Dorsolateral prefrontal cortex (tissue), 120 donors: ENCODE measurements at regions of chr6 and their contacts with region 1.

Region 1: DNA sequence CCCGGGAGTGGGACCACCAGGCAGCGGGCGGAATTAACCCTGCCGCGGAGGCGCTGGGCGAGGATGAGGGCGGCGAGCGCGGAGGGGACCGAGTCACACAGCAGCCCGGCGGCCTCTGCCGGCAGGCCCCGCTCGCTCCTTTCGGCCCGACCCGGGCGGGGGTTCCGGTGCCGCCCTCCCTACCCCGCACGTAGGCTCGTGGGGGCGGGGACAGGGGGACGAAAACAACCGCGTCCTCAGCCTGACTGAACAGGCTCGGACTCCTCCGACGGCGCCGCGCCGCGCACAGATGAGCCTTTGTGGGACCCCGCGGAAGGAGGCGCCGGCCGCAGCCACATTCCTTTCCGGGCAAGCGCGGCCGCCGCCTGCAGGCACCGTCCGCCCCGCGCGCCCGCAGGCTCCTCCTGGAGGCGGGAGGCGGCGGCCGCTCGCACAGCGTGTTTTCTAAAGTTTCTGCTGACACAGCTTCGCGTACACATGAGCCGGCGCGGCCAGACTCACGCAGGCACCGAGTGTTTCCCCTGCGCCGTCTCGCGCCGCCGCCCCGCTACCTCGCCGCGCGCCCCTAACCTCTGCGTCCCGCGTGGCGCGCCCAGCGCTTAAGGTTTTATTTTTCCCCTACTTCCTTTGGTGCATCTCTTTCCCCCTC is 244.3 kb downstream of the ARID1B start:
- DNase-seq: peak; percentile 82 to 93 (median 89)
- H3K4me3 ChIP-seq: peak overlapping the region; percentile 48 to 98 (median 83)
- H3K27ac ChIP-seq: peak overlapping the region; percentile 89 to 100 (median 99)
- H3K27me3 ChIP-seq: no peaks in the 10 kb centered on the region
- CTCF ChIP-seq: peak in 51 of 56 donors; percentile 5 to 67 (median 43)

Region 2: GRCh38 chr6:156876302-156876701 is 145.2 kb before region 1 on chr6:
- intact Hi-C with region 1: loop called (anchors 5 kb)
- DNase-seq: peak in 5 of 10 donors; percentile 32 to 57 (median 48)
- H3K4me3 ChIP-seq: no peak overlapping the region
- H3K27ac ChIP-seq: no peak overlapping the region
- H3K27me3 ChIP-seq: no peaks in the 10 kb centered on the region
- CTCF ChIP-seq: peak in 38 of 56 donors; percentile 12 to 55 (median 32)

Region 3: GRCh38 chr6:157184202-157185020 is 162.9 kb after region 1 on chr6:
- intact Hi-C with region 1: loop called in 1 of 2 experiments (anchors 5 kb)
- DNase-seq: peak; percentile 67 to 82 (median 76)
- H3K4me3 ChIP-seq: peak overlapping the region in 53 of 59 donors; percentile 2 to 62 (median 40)
- H3K27ac ChIP-seq: peak overlapping the region in 31 of 59 donors; percentile 1 to 72 (median 42)
- H3K27me3 ChIP-seq: no peaks in the 10 kb centered on the region
- CTCF ChIP-seq: peak; percentile 57 to 98 (median 91)